Mammary epithelial cell (primary cell): ENCODE measurements at regions of chr1 and their contacts with region 1.

Region 1: GRCh38 chr1:178189814-178190213 is 95.9 kb downstream of the RASAL2 start:
- DNase-seq: no peak
- H3K4me3 ChIP-seq: no peak overlapping the region
- H3K27ac ChIP-seq: peak overlapping the region; percentile 0
- H3K4me1 ChIP-seq: peaks cover 9% of the 10 kb centered on the region
- H3K27me3 ChIP-seq: no peaks in the 10 kb centered on the region
- CTCF ChIP-seq: peak; percentile 51 to 67

Region 2: DNA sequence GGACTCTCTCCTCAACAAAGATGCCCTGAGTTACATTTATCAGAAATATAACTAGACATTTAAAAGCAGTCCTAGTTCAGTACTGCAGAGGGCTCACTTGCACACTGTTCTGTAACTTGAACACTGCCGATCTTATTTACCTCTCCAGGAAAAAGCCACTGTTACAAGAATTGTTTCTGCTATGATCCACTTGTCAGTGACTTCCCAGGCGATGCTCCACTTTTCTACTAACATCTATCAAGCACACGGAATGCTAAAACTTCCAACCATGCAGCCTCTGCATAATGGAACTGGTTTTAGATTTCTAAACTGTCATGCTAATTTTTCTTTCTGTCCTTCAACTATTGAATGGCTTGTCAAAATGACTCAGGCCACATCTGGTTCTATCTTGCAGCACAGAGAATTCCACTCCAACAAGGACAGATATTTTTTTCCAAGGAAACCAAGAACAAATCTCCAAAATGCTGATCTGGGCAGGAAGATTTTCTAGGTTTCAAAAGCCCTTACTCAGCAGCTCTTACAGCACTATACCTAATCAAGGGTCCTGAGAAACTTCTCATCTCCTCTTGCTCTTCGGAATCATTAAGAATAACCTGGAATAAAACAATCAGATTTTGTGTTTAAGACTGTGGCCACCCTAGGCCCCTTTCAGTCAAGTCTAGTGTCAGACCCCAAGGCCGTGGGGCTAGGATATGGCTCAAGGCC is 229.9 kb before region 1 on chr1:
- CTCF ChIA-PET with region 1: no interaction called
- dilution Hi-C with region 1: no loop called
- in situ Hi-C with region 1: no loop called
- intact Hi-C with region 1: no loop called
- DNase-seq: peak; percentile 33
- H3K4me3 ChIP-seq: no peak overlapping the region
- H3K27ac ChIP-seq: no peak overlapping the region
- H3K4me1 ChIP-seq: no peaks in the 10 kb centered on the region
- H3K27me3 ChIP-seq: no peaks in the 10 kb centered on the region
- CTCF ChIP-seq: peak; percentile 44 to 53

Region 3: GRCh38 chr1:178262120-178262500 is 72.3 kb after region 1 on chr1:
- CTCF ChIA-PET with region 1: no interaction called
- dilution Hi-C with region 1: no loop called
- in situ Hi-C with region 1: no loop called
- intact Hi-C with region 1: loop called (anchors 10 kb)
- DNase-seq: peak; percentile 84
- H3K4me3 ChIP-seq: no peak overlapping the region
- H3K27ac ChIP-seq: peak overlapping the region; percentile 80
- H3K4me1 ChIP-seq: peaks cover 8% of the 10 kb centered on the region
- H3K27me3 ChIP-seq: no peaks in the 10 kb centered on the region
- CTCF ChIP-seq: no peak